Thyroid gland (tissue), 4 donors: ENCODE measurements at regions of chr11 and their contacts with region 1.

Region 1: DNA sequence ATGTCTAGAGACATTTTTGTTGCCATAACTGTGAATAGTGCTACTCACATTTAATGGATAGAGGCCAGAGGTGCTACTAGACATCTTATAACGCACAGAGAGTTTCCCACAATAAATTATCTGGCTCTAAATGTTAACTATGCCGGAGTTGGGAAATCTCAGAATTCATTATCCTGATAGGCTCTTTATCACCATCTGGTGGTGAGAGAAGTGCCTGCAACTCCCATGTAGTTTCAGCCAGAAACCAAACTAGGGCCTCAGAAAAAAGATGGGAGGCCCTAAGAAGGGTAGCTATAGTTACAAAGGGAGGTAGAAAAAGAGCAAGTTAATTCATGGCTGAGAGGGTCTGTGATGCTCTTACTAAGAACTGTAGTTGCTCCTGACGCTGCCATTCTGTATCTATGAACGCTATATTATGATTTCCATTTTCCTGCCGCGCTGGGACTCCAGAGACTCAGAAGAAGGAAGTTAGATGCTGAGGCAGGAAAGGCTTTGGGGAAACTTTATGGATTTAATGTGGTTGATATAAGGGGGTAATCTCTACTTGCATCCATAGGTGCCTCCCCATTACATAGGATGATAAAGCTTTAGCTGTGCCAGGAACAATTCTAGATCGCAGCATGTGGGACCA is 22.9 kb upstream of the MRPL17 start:
- DNase-seq: peak; percentile 45 to 50
- H3K4me3 ChIP-seq: no peak overlapping the region
- H3K27ac ChIP-seq: no peak overlapping the region
- H3K4me1 ChIP-seq: peaks cover 7 to 14% of the 10 kb centered on the region in 2 donors
- H3K27me3 ChIP-seq: no peaks in the 10 kb centered on the region
- CTCF ChIP-seq: peak; percentile 66 to 94 (median 77)
- POLR2A ChIP-seq: no peak

Region 2: GRCh38 chr11:6531267-6531752 is 174.7 kb before region 1 on chr11:
- intact Hi-C with region 1: loop called (anchors 10 kb)
- DNase-seq: peak in 1 of 2 donors; percentile 15
- H3K4me3 ChIP-seq: no peak overlapping the region
- H3K27ac ChIP-seq: no peak overlapping the region
- H3K4me1 ChIP-seq: no peaks in the 10 kb centered on the region
- H3K27me3 ChIP-seq: no peaks in the 10 kb centered on the region
- CTCF ChIP-seq: peak; percentile 32 to 95 (median 80)
- POLR2A ChIP-seq: no peak

Region 3: GRCh38 chr11:6619004-6619745 is 86.8 kb before region 1 on chr11 and contains the start of gene TPP1:
- intact Hi-C with region 1: no loop called
- DNase-seq: peak; percentile 92 to 94
- H3K4me3 ChIP-seq: peak within 1 kb of the TSS; percentile 38 to 68 (median 62)
- H3K27ac ChIP-seq: peak within 1 kb of the TSS; percentile 56 to 87 (median 72)
- H3K4me1 ChIP-seq: peaks cover 14 to 15% of the 10 kb centered on the region in 2 donors
- H3K27me3 ChIP-seq: no peaks in the 10 kb centered on the region
- CTCF ChIP-seq: no peak
- POLR2A ChIP-seq: peak in 1 of 2 donors; percentile 88
- total RNA-seq, gene TPP1: 51.3 to 97.3 (median 69.1) TPM

Region 4: GRCh38 chr11:6757373-6757967 is 51.5 kb after region 1 on chr11:
- intact Hi-C with region 1: loop called (anchors 10 kb)
- DNase-seq: peak; percentile 65 to 72
- H3K4me3 ChIP-seq: no peak overlapping the region
- H3K27ac ChIP-seq: no peak overlapping the region
- H3K4me1 ChIP-seq: no peaks in the 10 kb centered on the region
- H3K27me3 ChIP-seq: no peaks in the 10 kb centered on the region
- CTCF ChIP-seq: peak in 5 of 6 experiments; percentile 40 to 82 (median 63)
- POLR2A ChIP-seq: no peak

Region 5: DNA sequence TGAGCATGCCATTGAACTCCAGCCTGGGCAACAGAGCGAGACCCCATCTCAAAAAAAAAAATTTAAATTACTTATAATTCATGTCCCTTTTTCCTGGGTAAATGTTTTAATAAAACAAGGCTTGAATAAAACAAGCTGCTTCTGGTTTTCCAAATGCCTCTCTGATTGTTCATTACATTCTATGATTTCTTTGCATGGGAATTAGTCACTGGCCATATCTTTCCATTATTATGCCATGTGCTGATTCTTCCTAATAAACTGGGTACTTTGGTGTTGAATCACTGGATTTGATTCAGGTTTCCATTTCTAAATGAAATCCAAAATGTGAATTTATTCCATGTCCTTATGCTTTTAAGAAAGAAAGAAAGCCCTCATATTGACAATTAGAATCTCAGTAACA is 262.8 kb after region 1 on chr11:
- intact Hi-C with region 1: no loop called
- DNase-seq: no peak
- H3K4me3 ChIP-seq: no peak overlapping the region
- H3K27ac ChIP-seq: no peak overlapping the region
- H3K4me1 ChIP-seq: no peaks in the 10 kb centered on the region
- H3K27me3 ChIP-seq: no peaks in the 10 kb centered on the region
- CTCF ChIP-seq: no peak
- POLR2A ChIP-seq: no peak